ENCODE measurements at regions of chr5 and their contacts with region 1.

Region 1: GRCh38 chr5:59188419-59189225 is 605.7 kb downstream of the RAB3C start:
- DNase-seq: peak; percentile 31 to 75 (median 58)
- H3K4me3 ChIP-seq: no peak overlapping the region
- H3K4me3 Mint-ChIP-seq: peak overlapping the region in 1 of 7 donors; percentile 9
- H3K27ac ChIP-seq: no peak overlapping the region
- H3K27ac Mint-ChIP-seq: no peak overlapping the region
- H3K4me1 ChIP-seq: no peaks in the 10 kb centered on the region
- H3K4me1 Mint-ChIP-seq: peaks cover 3 to 6% (median 5%) of the 10 kb centered on the region in 3 donors
- H3K27me3 ChIP-seq: no peaks in the 10 kb centered on the region
- H3K27me3 Mint-ChIP-seq: peaks cover 4 to 22% of the 10 kb centered on the region in 2 donors

Region 2: DNA sequence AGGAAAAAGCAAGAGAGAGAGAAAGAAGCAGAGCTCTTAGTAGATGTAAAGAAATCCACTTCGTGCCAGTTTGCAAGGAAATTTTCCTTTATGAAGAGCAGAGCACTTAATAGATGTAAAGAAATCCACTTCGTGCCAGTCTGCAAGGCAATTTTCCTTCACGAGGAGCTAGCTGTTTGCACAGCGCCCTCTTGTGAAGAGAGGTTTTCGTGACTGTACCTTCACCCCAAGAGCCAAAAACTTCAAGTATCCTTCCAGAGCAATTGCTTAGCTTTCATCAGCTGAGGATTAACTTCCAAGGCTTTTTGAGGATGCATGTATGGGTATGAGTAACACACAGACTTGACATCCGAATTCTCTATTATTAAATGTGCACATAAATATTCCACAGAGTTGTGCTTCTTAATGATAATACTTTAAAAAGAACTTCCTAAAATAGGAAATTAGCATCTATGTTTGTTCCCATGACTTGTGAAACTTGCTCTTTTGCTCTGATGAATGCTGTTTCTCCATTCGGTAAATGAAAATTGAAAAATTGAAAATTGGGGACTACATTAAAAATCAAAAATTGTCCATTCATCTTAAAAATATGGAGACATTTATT is 179.3 kb after region 1 on chr5:
- CTCF ChIA-PET with region 1: interaction called, 17 read pairs
- POLR2A ChIA-PET with region 1: no interaction called
- DNase-seq: peak in 4 of 5 donors; percentile 1 to 46 (median 14)
- H3K4me3 ChIP-seq: no peak overlapping the region
- H3K4me3 Mint-ChIP-seq: no peak overlapping the region
- H3K27ac ChIP-seq: no peak overlapping the region
- H3K27ac Mint-ChIP-seq: no peak overlapping the region
- H3K4me1 ChIP-seq: no peaks in the 10 kb centered on the region
- H3K4me1 Mint-ChIP-seq: peaks cover 0 to 4% (median 2%) of the 10 kb centered on the region in 3 donors
- H3K27me3 ChIP-seq: no peaks in the 10 kb centered on the region
- H3K27me3 Mint-ChIP-seq: peaks cover 7 to 43% of the 10 kb centered on the region in 2 donors

Region 3: DNA sequence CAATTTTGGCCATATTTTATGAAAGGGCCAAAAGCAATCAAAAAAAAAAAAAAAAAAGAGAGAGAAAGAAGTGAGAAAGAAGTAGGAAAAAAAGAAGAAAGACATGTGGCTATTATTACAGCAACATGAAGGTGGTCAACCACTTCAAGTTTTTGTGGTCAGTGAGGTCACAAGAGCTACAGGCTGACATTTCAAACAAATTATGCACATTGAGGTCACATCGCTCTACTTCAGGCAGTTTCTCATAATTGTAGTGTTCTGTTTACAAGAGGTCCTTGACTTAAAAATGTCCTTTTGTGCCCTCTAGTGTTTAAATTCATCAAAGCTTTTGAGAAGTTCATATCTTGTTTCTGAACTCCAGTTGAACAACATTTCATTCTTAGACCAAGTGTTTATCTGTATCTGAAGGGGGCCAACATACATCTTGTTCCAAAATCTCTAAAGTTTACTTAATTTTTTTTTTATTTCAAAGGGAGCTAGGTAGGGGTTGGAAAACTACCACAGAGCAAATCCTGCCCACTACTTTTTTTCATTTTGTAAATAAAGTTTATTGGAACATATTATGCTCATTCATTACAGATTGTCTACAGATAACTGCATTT is 191.8 kb after region 1 on chr5:
- CTCF ChIA-PET with region 1: interaction called, 27 read pairs
- POLR2A ChIA-PET with region 1: no interaction called
- DNase-seq: peak in 2 of 5 donors; percentile 26 to 34
- H3K4me3 ChIP-seq: no peak overlapping the region
- H3K4me3 Mint-ChIP-seq: no peak overlapping the region
- H3K27ac ChIP-seq: no peak overlapping the region
- H3K27ac Mint-ChIP-seq: no peak overlapping the region
- H3K4me1 ChIP-seq: no peaks in the 10 kb centered on the region
- H3K4me1 Mint-ChIP-seq: peaks cover 0 to 4% (median 3%) of the 10 kb centered on the region in 3 donors
- H3K27me3 ChIP-seq: no peaks in the 10 kb centered on the region
- H3K27me3 Mint-ChIP-seq: peaks cover 0 to 3% of the 10 kb centered on the region in 2 donors

Measured in CD8-positive, alpha-beta memory T cell (primary cell).